Gastrocnemius medialis (tissue), 4 donors: ENCODE measurements at regions of chr2 and their contacts with region 1.

Region 1: GRCh38 chr2:20225294-20226151 is 593 bp upstream of the SDC1 start:
- DNase-seq: peak in 1 of 2 donors; percentile 12
- ATAC-seq: peak; percentile 46 to 50
- H3K4me3 ChIP-seq: peak overlapping the region; percentile 62 to 68 (median 64)
- H3K27ac ChIP-seq: no peak overlapping the region
- H3K4me1 ChIP-seq: peaks cover 0 to 8% of the 10 kb centered on the region in 2 donors
- H3K27me3 ChIP-seq: peaks cover 14 to 21% (median 21%) of the 10 kb centered on the region in 3 donors
- CTCF ChIP-seq: peak in 2 of 5 experiments; percentile 50 to 54
- POLR2A ChIP-seq: no peak

Region 2: DNA sequence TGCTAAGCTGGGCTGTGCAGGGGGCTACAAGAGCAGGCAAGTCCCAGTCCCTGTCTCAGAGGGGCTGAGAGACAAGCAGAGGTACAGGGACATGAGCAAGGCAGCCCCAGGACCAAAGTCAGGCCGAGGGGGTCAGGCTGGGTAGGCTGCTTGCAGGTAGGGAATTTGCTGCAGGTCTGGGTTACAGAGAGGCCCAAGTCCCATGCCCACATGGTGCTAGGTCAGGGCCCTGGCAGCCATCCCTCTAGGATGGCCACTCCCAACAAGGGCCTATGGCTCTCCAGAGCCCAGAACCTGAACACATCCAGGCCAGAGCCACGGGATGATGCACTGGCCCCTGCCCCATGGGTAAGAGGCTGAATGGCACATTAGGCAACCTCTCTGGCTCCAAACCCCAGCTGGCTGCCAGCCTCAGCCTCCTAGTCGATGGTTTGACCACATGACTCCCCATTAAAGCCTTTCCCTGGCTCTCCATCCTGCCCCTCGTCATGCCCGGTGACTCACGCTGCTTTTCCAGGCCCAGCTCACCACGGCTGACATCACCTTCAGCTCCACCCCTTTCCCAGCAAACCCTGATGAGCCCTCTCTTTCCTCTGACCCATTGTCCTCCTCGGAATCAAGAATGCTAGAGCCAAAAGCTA is 84.3 kb before region 1 on chr2:
- in situ Hi-C with region 1: no loop called
- intact Hi-C with region 1: loop called (anchors 10 kb)
- DNase-seq: peak; percentile 41 to 49
- ATAC-seq: peak; percentile 62 to 83
- H3K4me3 ChIP-seq: no peak overlapping the region
- H3K27ac ChIP-seq: peak overlapping the region in 1 of 4 donors; percentile 35
- H3K4me1 ChIP-seq: no peaks in the 10 kb centered on the region
- H3K27me3 ChIP-seq: no peaks in the 10 kb centered on the region
- CTCF ChIP-seq: no peak
- POLR2A ChIP-seq: no peak

Region 3: GRCh38 chr2:20282916-20283592 is 57.5 kb after region 1 on chr2:
- in situ Hi-C with region 1: no loop called
- intact Hi-C with region 1: no loop called
- DNase-seq: no peak
- ATAC-seq: no peak
- H3K4me3 ChIP-seq: no peak overlapping the region
- H3K27ac ChIP-seq: no peak overlapping the region
- H3K4me1 ChIP-seq: peaks cover 0 to 5% of the 10 kb centered on the region in 2 donors
- H3K27me3 ChIP-seq: no peaks in the 10 kb centered on the region
- CTCF ChIP-seq: no peak
- POLR2A ChIP-seq: no peak

Region 4: GRCh38 chr2:20411361-20411894 is 185.9 kb after region 1 on chr2:
- in situ Hi-C with region 1: no loop called
- intact Hi-C with region 1: no loop called
- DNase-seq: peak; percentile 63 to 80
- ATAC-seq: peak; percentile 89 to 95
- H3K4me3 ChIP-seq: no peak overlapping the region
- H3K27ac ChIP-seq: no peak overlapping the region
- H3K4me1 ChIP-seq: no peaks in the 10 kb centered on the region
- H3K27me3 ChIP-seq: no peaks in the 10 kb centered on the region
- CTCF ChIP-seq: peak; percentile 53 to 79 (median 76)
- POLR2A ChIP-seq: no peak